KBM-7 (cell line): ENCODE measurements at regions of chr18 and their contacts with region 1.

Region 1: DNA sequence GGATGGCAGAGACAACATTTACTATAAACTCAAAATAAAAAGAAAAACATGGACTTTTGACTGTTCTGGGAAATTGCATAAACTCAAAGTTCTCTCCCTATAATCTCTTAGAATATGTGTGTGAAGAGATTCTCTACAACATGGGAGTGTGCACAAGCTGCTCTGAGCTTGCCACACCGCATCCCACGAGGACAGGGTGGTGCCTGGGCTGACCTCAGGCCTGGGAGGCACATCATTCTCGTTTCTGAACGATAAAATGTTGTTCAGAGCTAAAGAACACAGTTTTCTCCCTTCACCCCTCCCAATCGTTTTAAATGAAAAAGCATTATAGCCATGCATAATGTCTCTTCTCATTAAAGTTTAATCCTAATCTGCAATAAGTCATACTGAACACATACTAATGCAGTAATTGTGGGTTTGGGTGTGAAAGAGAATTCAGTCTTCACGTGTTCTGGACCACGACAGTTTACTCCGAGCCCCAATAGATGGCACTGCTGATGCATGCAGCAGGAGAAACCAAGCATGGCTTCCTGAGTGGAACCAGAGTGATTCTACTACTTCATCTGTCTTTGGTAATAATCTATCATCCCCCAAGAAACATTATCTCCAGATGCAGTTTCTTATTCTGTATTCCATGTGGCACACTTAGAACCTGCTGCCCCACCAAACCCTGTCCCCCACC is 46.9 kb upstream of the LAMA1 start:
- DNase-seq: no peak

Region 2: DNA sequence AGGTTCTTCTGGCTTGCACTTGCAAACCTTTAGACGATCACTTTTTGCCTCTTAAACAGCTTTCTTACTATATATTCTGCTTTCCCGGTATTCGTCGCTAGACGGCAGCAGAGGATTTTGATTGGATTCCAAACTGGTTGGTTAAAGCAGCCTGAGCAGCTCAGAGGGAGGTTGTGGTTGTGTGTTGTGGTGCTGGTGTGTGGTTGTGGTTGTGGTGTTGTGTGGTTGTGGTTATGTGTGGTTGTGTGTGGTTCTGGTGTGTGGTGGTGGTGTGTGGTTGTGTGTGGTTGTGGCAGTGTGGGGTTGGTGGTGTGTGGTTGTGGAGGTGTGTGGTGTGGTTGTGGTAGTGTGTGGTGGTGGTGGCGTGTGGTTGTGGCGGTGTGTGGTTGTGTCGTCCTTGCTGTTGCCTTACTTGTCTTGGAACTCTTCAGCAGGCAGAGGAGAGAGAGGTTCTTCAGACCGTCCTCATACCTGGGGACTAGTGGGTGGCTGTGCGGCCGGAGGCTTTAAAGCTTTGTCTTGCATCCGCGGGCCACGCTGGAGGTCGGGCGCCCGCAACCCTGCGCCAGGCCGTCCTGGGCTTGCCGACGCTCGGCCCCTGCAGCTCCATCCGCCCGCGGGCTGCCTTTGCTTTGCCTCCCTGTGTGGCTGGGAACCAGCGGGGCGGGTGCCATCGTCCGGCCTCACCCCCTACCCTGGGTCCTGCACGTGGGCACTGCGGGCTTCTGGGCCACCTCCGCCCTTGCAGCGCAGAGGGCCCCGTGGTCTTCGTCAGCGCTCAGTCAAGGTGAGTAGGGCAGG is 244.2 kb before region 1 on chr18:
- in situ Hi-C with region 1: loop called (anchors 10 kb)
- DNase-seq: peak; percentile 73

Region 3: DNA sequence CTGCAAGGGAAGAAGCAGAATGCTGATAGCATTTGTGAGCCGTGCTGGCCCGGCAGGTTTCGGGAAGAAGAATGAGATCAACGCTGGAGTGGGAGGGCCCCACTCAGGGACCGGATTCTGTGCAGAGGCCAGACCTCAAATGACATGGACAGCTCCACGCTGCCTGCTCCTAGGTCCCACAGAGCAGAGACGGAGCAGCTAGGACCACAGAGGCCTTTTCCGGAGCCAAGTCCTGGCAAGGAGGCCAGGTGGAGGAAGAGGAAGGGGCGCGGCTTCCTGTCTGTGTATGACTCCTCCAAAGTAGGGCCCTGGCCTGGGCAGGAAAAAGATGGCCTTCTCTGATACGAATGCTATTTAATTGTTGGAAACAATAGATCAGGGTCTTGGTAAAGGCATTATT is 206.3 kb after region 1 on chr18:
- in situ Hi-C with region 1: no loop called
- DNase-seq: peak; percentile 8